Activated CD4-positive, alpha-beta T cell treated with anti-CD3 and anti-CD28 coated beads, Interleukin-2, amount 10 ng/mL, durations not matched to agents 7 days and 5 days (primary cell): ENCODE measurements at regions of chr13 and their contacts with region 1.

Region 1: GRCh38 chr13:44218501-44219240 is 155.0 kb upstream of the SERP2 start:
- DNase-seq: no peak
- H3K4me3 Mint-ChIP-seq: no peak overlapping the region
- H3K27ac Mint-ChIP-seq: no peak overlapping the region
- H3K4me1 Mint-ChIP-seq: no peaks in the 10 kb centered on the region
- H3K27me3 Mint-ChIP-seq: peaks cover 6% of the 10 kb centered on the region

Region 2: DNA sequence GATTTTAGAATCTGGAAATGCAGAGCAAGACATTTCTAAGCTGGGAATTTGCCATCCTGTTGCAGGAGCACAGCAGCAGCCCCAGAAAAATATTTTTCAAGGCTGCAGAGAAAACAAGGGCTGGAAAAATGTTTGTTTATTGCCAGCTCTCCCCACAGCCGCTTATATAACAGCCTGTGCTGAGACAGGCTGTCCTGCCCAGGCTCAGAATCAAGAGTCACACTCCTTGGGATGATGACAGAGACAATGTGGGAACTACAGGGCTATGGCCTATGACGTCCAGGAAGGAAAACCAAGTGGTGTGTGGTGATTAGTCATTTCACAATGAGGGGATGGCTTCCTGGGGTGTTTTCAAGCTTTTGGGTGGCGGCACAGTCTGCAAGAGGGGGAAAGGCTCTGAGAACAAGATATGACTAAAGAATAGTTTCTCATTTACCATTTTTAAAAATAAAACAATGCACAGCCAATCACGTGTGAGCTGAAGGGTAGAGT is 18.7 kb after region 1 on chr13:
- CTCF ChIA-PET with region 1: no interaction called
- POLR2A ChIA-PET with region 1: no interaction called
- DNase-seq: no peak
- H3K4me3 Mint-ChIP-seq: no peak overlapping the region
- H3K27ac Mint-ChIP-seq: no peak overlapping the region
- H3K4me1 Mint-ChIP-seq: peaks cover 11% of the 10 kb centered on the region
- H3K27me3 Mint-ChIP-seq: peaks cover 17% of the 10 kb centered on the region

Region 3: GRCh38 chr13:44252938-44253337 is 34.3 kb after region 1 on chr13:
- CTCF ChIA-PET with region 1: no interaction called
- POLR2A ChIA-PET with region 1: interaction called, 15 read pairs
- DNase-seq: no peak
- H3K4me3 Mint-ChIP-seq: no peak overlapping the region
- H3K27ac Mint-ChIP-seq: no peak overlapping the region
- H3K4me1 Mint-ChIP-seq: no peaks in the 10 kb centered on the region
- H3K27me3 Mint-ChIP-seq: peaks cover 7% of the 10 kb centered on the region